Upper lobe of right lung (tissue), 1 donor: ENCODE measurements at regions of chr16 and their contacts with region 1.

Region 1: DNA sequence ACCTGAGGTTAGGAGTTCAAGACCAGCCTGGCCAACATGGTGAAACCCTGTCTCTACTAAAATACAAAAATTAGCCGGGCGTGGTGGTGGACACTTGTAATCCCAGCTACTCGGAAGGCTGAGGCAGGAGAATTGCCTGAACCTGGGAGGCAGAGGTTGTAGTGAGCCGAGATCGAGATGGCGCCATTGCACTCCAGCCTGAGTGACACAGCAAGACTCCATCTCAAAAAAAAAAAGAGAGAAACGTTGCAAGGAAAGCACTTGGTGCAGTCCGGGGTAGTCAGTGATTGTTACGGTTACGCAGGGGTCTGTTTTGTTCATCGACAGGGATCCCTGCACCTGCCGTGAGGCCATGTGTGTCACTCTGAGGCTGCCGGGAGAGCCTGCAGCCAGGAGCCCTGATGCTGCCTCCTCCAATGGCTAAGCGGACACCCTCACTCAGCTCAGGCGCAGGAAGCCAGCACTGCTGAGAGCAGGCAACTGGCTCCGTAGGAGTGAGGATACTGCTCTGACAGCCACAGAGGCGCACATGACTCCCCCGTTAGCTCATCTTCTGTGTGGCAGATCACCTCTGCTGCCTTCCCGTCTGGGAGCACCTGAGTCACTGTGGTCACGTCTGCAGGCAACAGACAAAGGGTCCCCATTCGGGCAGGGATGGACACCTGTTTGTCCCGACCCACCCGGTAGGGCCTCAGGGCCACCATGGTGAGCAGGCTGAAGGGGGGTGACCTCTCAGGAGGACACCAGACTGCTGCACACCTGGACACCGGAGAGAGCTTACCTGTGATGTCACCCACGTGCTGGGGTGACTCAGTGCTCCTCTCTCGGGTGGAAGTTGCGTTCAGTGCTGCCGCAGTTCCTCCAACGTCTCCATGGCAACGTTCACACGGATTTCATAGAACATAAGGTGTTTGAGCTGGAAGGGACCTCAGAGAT is 5.2 kb upstream of the RAB26 start:
- DNase-seq: no peak
- ATAC-seq: no peak
- H3K4me3 ChIP-seq: no peak overlapping the region
- H3K27ac ChIP-seq: no peak overlapping the region
- H3K4me1 ChIP-seq: peaks cover 12% of the 10 kb centered on the region
- H3K27me3 ChIP-seq: no peaks in the 10 kb centered on the region
- CTCF ChIP-seq: no peak

Region 2: GRCh38 chr16:2023098-2023925 is 119.9 kb before region 1 on chr16:
- intact Hi-C with region 1: loop called (anchors 5 kb)
- DNase-seq: peak; percentile 96
- ATAC-seq: peak; percentile 94
- H3K4me3 ChIP-seq: peak overlapping the region; percentile 41
- H3K27ac ChIP-seq: peak overlapping the region; percentile 82
- H3K4me1 ChIP-seq: peaks cover 46% of the 10 kb centered on the region
- H3K27me3 ChIP-seq: peaks cover 35% of the 10 kb centered on the region
- CTCF ChIP-seq: peak; percentile 98

Region 3: DNA sequence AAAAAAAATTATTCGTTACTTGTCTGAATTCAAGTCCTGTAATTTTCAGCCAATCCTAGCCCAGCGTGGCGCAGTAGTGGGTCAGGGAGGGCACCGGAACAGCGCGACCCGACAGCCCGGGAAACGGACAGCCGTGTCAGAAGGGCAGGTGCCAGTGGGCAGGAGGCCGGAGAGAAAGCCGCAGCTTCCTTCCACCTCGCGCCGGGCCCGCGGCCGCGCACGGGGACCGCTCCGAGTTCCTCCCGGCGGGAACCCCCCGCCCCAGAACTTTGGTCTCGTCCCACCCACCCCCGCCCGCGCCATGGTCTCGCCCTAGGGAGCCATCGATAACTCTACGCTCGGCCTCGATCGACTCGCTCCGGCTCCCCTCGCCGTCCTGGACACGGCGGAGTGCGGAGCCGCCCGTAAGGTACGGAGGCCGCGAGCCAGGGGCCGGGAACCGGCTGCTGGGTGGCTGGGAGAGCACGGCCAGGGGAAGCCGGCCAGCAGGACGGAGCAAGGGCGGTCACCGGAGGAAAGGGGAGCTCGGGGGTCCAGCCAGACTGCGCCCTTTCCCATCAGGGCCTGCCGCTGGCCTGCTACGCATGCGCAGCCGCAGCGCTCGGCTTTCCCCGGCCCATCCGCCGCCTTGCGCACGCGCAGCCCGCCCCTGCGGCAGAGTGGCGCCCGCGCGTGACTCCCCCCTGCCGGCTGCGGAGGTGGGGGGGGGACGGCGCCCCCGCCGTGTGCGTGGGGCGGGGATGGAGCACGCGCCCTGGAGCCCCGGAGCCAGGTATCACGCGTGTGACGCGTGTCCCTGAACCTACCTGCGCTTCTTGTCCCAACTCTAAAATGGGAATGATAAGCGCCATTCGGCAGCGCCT is 62.1 kb after region 1 on chr16 and contains the start of gene MLST8:
- intact Hi-C with region 1: no loop called
- DNase-seq: peak; percentile 94
- ATAC-seq: peak; percentile 96
- H3K4me3 ChIP-seq: peak within 1 kb of the TSS; percentile 86
- H3K27ac ChIP-seq: peak within 1 kb of the TSS; percentile 98
- H3K4me1 ChIP-seq: peaks cover 18% of the 10 kb centered on the region
- H3K27me3 ChIP-seq: no peaks in the 10 kb centered on the region
- CTCF ChIP-seq: peak; percentile 22
- total RNA-seq, gene MLST8: 29.9 TPM